ENCODE measurements at regions of chr6 and their contacts with region 1.

Region 1: GRCh38 chr6:2103644-2104523 is 141.5 kb downstream of the GMDS start:
- DNase-seq: no peak
- H3K4me3 ChIP-seq: peak overlapping the region in 44 of 59 donors; percentile 1 to 50 (median 24)
- H3K27ac ChIP-seq: peak overlapping the region in 44 of 59 donors; percentile 1 to 83 (median 64)
- H3K27me3 ChIP-seq: no peaks in the 10 kb centered on the region
- CTCF ChIP-seq: peak; percentile 30 to 80 (median 63)

Region 2: GRCh38 chr6:1840491-1841121 is 263.3 kb before region 1 on chr6:
- intact Hi-C with region 1: no loop called
- DNase-seq: no peak
- H3K4me3 ChIP-seq: peak overlapping the region in 4 of 59 donors; percentile 6 to 18 (median 14)
- H3K27ac ChIP-seq: peak overlapping the region in 6 of 59 donors; percentile 2 to 51 (median 36)
- H3K27me3 ChIP-seq: no peaks in the 10 kb centered on the region
- CTCF ChIP-seq: no peak

Region 3: GRCh38 chr6:2353412-2354137 is 249.7 kb after region 1 on chr6:
- intact Hi-C with region 1: loop called (anchors 10 kb)
- DNase-seq: peak in 7 of 10 donors; percentile 45 to 75 (median 49)
- H3K4me3 ChIP-seq: peak overlapping the region in 1 of 59 donors; percentile 11
- H3K27ac ChIP-seq: peak overlapping the region in 2 of 59 donors; percentile 21 to 26
- H3K27me3 ChIP-seq: peaks cover 0 to 3% (median 0%) of the 10 kb centered on the region in 45 donors
- CTCF ChIP-seq: peak; percentile 52 to 93 (median 79)

Region 4: GRCh38 chr6:2634139-2634964 is 530.5 kb after region 1 on chr6:
- intact Hi-C with region 1: loop called (anchors 10 kb)
- DNase-seq: peak; percentile 56 to 86 (median 76)
- H3K4me3 ChIP-seq: peak overlapping the region; percentile 33 to 74 (median 62)
- H3K27ac ChIP-seq: peak overlapping the region in 54 of 59 donors; percentile 12 to 89 (median 70)
- H3K27me3 ChIP-seq: peaks cover 0 to 12% (median 0%) of the 10 kb centered on the region in 45 donors
- CTCF ChIP-seq: peak; percentile 95 to 100 (median 99)